Colonic mucosa (tissue), 4 donors: ENCODE measurements at regions of chr11 and their contacts with region 1.

Region 1: DNA sequence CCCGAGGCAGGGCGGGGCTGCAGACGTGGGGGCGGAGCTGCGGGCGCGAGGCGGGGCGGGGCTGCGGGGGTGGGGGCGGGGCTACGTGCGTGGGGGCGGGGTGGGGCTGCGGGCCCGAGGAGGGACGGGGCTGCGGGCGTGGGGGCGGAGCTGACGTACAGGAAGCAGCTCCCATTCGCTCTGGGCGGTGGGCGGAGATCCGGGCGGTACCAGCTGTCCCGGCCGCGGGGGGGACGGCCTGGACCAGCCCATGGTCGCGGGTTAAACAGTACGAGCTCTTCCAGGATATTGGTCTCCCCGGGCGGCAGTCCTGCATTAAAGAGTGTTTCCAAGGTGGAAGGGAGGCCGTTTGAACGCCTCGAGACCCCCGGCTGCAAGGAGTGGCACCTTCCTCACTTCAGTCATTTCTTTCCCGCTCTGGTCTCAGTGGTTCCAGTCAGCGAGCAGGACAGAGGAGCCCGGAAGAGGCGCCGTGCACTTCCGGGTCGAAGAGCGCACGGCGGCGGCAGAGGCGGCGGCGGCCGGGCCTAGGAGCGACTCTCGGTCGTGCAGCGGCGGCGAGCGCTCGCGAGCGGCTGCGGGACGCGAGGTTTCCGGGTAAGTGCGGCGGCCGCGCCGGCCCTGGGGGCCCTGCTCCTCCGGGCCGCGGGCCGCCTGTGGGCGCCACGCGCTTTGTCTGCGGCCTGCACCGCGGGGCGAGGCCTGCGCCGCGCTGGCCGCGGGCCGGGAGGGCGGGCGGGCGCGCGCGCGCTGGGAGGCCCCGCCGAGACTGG is at the start of gene PHRF1:
- DNase-seq: peak; percentile 95
- H3K4me3 ChIP-seq: peak within 1 kb of the TSS; percentile 78
- H3K27ac ChIP-seq: peak within 1 kb of the TSS; percentile 77
- H3K4me1 ChIP-seq: peaks cover 16% of the 10 kb centered on the region
- H3K27me3 ChIP-seq: no peaks in the 10 kb centered on the region
- CTCF ChIP-seq: no peak
- total RNA-seq, gene PHRF1: 29.4 to 41.9 TPM

Region 2: DNA sequence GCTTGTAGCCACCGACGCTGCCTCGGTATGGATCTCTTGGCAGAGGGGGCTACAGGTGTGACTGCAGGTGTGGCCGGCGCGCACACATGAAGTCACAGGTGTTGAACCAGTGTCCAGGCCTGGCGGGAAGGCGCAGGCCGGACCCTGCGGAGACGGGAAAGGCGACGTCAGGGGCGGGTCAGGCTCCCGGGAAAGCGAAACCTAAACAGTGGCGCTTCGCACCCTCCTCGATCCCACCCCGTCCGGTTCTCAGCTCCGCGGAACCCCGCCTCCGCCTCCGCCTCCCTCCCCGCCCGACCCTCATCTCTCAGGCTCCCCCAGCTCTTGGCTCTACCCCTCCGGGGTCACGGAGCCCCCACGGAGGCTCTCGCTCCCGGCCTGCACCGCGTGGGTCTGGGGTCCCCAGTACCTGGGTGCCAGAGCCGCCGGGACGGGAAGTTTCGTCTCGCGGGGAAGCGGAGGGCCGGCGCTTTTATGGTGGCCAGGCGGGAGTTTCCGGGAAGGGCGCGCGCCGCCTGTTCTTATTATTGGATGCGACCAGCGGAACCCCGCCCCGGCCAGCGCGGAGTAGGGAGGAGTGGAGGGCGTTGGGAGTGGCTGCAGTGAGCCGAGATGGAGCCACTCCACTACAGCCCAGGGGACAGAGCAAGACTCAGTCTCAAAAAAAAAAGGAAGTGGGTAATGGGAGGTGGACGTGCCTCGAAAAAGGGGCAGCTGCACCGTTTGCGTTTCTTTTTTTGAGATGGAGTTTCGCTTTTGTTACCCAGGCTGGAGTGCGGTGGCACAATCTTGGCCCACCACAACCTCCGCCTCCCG is 39.5 kb after region 1 on chr11 and contains the start of gene IRF7:
- intact Hi-C with region 1: loop called (anchors 5 kb)
- DNase-seq: peak; percentile 97
- H3K4me3 ChIP-seq: peak within 1 kb of the TSS; percentile 69
- H3K27ac ChIP-seq: peak within 1 kb of the TSS; percentile 95
- H3K4me1 ChIP-seq: peaks cover 41% of the 10 kb centered on the region
- H3K27me3 ChIP-seq: no peaks in the 10 kb centered on the region
- CTCF ChIP-seq: no peak
- total RNA-seq, gene IRF7: 22.1 to 25.6 TPM